ENCODE measurements at regions of chr4 and their contacts with region 1.

Region 1: GRCh38 chr4:88514557-88515511 is 8.7 kb downstream of the PYURF start:
- DNase-seq: no peak
- H3K4me3 ChIP-seq: no peak overlapping the region
- H3K27ac ChIP-seq: no peak overlapping the region
- H3K4me1 ChIP-seq: no peaks in the 10 kb centered on the region
- H3K27me3 ChIP-seq: no peaks in the 10 kb centered on the region
- CTCF ChIP-seq: no peak

Region 2: DNA sequence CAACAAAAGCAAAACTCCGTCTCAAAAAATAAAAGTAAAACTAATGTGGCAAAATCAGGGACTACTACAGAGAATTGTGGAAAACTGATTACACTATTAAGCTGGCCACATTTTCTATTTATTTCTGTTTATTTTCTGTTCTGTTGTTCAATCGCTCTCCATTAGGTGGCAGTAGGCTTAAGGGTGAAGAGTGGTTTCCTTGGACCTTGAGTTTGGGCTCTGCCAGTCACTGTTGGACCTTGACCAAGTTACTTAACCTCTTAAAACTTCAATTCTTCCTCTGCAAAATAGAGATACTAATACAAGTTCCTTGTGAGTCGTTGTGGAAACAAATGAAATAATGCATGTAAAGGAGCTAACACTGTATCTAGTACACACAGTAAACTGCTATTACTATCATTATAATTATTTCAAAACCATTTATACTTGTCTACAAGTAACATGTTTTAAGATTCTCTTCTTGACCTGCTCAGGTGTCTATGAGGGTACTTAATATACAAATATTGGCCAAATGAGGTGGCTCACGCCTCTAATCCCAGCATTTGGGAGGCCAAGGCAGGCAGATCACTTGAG is 1139.0 kb before region 1 on chr4:
- CTCF ChIA-PET with region 1: interaction called, 10 read pairs
- POLR2A ChIA-PET with region 1: no interaction called
- intact Hi-C with region 1: no loop called
- DNase-seq: no peak
- H3K4me3 ChIP-seq: no peak overlapping the region
- H3K27ac ChIP-seq: no peak overlapping the region
- H3K4me1 ChIP-seq: no peaks in the 10 kb centered on the region
- H3K27me3 ChIP-seq: no peaks in the 10 kb centered on the region
- CTCF ChIP-seq: peak; percentile 64

Region 3: GRCh38 chr4:87856816-87857215 is 658.0 kb before region 1 on chr4:
- CTCF ChIA-PET with region 1: no interaction called
- POLR2A ChIA-PET with region 1: no interaction called
- intact Hi-C with region 1: loop called (anchors 5 kb)
- DNase-seq: no peak
- H3K4me3 ChIP-seq: no peak overlapping the region
- H3K27ac ChIP-seq: no peak overlapping the region
- H3K4me1 ChIP-seq: peaks cover 10% of the 10 kb centered on the region
- H3K27me3 ChIP-seq: no peaks in the 10 kb centered on the region
- CTCF ChIP-seq: no peak

Region 4: DNA sequence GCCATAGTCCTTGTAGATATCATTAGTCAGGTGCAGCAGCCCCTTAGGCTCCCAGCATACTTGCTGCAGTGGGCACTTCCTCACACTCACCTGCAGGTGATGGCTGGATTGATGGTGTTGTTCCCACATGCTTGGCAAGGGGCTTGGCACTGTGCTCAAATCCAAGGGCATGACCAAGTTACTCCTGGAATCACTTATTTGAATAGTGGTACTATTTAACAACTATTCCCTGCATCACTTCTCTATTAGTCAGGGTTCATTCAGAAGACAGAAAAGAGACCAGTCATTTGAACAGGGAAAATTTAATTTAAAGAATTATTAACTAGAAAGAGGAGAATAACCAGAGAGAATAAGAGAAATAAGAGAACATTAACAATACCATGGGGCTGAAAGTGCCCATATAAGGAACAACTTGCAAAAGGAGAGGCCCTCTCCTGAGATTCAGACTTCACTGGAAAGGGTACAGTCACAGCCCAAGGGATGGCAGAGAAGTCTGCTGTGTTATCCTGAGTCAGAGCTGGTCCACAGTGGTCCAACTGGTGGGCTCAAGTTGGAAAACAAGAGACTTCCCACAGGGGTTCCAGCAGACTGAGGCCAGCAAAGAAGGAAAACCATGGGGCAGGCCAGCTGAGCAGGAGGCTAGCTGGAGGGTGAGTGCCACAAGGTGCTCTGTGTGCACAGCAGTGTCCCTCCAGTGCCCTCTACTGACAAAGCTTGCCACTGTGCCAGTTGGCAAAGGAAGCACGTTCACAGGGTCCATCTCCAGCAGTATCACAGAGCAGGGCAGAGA is 529.5 kb before region 1 on chr4:
- CTCF ChIA-PET with region 1: no interaction called
- POLR2A ChIA-PET with region 1: no interaction called
- intact Hi-C with region 1: loop called (anchors 1 kb)
- DNase-seq: peak; percentile 35 to 56
- H3K4me3 ChIP-seq: no peak overlapping the region
- H3K27ac ChIP-seq: no peak overlapping the region
- H3K4me1 ChIP-seq: no peaks in the 10 kb centered on the region
- H3K27me3 ChIP-seq: no peaks in the 10 kb centered on the region
- CTCF ChIP-seq: peak; percentile 69

Region 5: DNA sequence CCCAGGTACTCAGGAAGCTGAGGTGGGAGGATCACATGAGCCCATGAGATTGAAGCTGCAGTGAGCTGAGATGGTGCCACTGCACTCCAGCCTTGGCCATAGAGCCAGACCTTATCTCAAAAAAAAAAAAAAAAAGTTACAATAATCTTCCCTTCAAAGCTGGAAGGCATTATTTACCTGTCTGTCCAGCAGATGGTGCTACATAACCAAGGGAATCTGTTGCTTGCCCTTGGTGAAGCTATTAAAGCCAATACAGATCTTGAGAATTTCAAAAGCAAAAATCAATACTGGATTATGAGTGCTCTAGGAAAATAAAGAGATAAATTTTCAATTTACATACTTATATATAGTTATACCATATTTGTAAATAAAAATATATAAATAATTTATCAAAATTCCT is 481.5 kb before region 1 on chr4:
- CTCF ChIA-PET with region 1: interaction called, 9 read pairs
- POLR2A ChIA-PET with region 1: no interaction called
- intact Hi-C with region 1: loop called (anchors 1 kb)
- DNase-seq: peak; percentile 24 to 39
- H3K4me3 ChIP-seq: no peak overlapping the region
- H3K27ac ChIP-seq: no peak overlapping the region
- H3K4me1 ChIP-seq: peaks cover 8% of the 10 kb centered on the region; the same call in 1 of the 2 replicates
- H3K27me3 ChIP-seq: no peaks in the 10 kb centered on the region
- CTCF ChIP-seq: peak; percentile 71

Region 6: DNA sequence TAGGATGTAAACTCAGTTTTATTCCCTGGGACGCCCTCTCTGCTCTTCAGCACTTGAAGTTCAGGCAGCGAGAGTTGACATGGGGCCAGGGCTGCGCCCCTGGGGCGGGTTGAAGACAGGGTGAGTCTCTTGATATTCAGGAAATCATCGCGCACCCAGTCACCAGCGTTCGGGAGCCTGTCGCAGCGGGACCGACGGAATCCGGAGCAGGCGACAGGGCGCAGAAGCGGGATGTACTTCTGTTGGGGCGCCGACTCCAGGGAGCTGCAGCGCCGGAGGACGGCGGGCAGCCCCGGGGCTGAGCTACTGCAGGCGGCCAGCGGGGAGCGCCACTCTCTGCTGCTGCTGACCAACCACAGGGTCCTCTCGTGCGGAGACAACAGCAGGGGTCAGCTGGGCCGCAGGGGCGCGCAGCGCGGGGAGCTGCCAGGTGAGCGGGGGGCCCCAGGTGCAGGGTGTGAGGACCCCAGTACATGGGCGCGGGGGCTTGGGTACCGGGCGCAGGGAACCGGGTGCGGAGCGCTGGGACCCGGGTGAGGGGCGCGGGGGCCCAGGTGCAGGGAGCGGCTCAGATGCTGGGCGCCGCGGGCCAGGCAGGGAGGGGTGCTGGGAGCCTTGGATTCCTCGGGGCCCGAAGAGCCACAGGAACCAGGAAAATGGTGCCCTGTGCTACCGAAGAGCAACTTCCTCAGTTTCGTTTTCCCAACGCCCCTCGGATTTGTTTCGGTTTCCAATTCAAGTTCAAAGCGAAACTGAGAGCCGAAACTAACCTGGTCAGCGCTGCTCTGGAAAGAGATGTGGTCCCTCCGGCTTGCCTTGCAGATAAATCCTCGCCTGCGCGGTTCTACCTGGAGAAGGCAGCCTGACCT is 135.9 kb before region 1 on chr4 and contains the start of gene HERC6:
- CTCF ChIA-PET with region 1: no interaction called
- POLR2A ChIA-PET with region 1: no interaction called
- intact Hi-C with region 1: loop called (anchors 5 kb)
- DNase-seq: peak; percentile 64 to 80
- H3K4me3 ChIP-seq: peak within 1 kb of the TSS; percentile 74
- H3K27ac ChIP-seq: peak within 1 kb of the TSS; percentile 91
- H3K4me1 ChIP-seq: no peaks in the 10 kb centered on the region
- H3K27me3 ChIP-seq: no peaks in the 10 kb centered on the region
- CTCF ChIP-seq: peak; percentile 66; the same call in 1 of the 2 replicates
- total RNA-seq, gene HERC6: 4.9 and 5.6 TPM in 2 replicates

Region 7: DNA sequence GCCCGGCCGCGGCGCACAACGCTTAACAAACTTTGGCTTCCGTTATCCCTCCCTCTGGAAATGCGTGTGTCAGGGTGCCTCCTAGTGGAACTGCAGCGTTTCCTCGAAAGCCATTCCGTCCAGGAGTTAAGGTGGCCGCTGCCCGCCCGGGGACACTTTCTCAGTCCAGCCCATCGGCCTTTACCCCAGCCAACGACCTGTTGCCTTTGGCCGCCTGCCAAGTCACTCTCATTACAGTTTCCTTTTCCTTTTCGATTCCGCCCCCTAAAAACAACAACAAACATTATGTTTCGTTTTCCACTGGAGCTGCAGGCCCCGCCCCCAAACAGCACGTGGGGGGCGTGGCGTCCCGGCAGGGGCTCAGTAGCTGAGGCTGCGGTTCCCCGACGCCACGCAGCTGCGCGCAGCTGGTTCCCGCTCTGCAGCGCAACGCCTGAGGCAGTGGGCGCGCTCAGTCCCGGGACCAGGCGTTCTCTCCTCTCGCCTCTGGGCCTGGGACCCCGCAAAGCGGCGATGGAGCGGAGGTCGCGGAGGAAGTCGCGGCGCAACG is 58.0 kb before region 1 on chr4 and contains the start of gene HERC5:
- CTCF ChIA-PET with region 1: no interaction called
- POLR2A ChIA-PET with region 1: no interaction called
- intact Hi-C with region 1: loop called (anchors 5 kb)
- DNase-seq: peak; percentile 85 to 86
- H3K4me3 ChIP-seq: peak within 1 kb of the TSS; percentile 56; the same call in 1 of the 2 replicates
- H3K27ac ChIP-seq: no peak within 1 kb of the TSS
- H3K4me1 ChIP-seq: no peaks in the 10 kb centered on the region
- H3K27me3 ChIP-seq: no peaks in the 10 kb centered on the region
- CTCF ChIP-seq: peak; percentile 65
- total RNA-seq, gene HERC5: 3.6 and 4.6 TPM in 2 replicates

Region 8: DNA sequence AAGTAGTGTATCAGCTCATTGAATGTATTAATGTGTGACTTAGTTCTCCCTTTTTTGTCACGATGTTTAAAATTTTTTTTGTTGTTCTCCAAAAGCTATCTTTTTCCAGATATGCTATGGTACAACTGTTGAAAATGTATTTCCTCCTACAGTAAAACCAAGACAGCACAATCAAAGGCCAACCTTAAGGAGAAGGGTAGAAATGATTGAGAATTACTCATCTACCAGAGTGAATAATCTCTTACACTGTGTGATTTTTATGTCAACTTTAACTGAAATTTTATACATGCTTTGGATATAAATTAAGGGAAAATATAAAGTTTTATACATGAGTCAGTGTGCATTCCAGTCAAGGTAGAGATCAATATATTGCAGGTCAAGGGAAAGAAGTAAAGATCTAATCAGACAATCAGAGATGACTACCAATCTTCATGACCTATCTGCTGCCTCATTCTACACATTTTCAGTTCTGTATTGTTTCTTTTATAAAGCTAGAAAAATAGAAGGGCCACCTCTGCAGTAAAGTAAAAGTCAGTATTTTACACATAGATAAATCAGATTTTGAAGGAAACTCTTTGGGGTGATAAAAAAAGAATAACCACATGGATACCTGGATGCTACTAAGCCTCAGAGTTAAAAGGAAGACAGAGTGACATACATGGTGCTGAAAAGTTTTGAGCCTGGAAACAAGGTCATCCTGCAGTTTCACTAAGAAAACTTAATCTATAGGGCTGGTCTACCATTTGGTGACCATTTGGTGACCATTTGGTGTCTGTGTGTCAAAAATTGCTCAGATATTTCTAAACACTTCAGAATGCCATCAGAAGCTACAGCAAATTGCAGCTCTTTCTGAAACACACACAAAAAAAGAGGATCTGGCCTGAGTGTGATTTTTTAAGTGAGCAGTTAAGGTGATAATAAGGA is 540.6 kb after region 1 on chr4:
- CTCF ChIA-PET with region 1: no interaction called
- POLR2A ChIA-PET with region 1: no interaction called
- intact Hi-C with region 1: no loop called
- DNase-seq: no peak
- H3K4me3 ChIP-seq: peak overlapping the region; percentile 58; the same call in 1 of the 2 replicates
- H3K27ac ChIP-seq: no peak overlapping the region
- H3K4me1 ChIP-seq: peaks cover 15% of the 10 kb centered on the region; the same call in 1 of the 2 replicates
- H3K27me3 ChIP-seq: no peaks in the 10 kb centered on the region
- CTCF ChIP-seq: no peak